OCI-LY7 (cell line): ENCODE measurements at regions of chr12 and their contacts with region 1.

Region 1: GRCh38 chr12:95336390-95337067 is 118.9 kb downstream of the VEZT start:
- DNase-seq: peak; percentile 89
- H3K4me3 ChIP-seq: peak overlapping the region; percentile 59
- H3K27ac ChIP-seq: peak overlapping the region; percentile 68
- H3K4me1 ChIP-seq: peaks cover 80% of the 10 kb centered on the region
- CTCF ChIP-seq: peak; percentile 98

Region 2: DNA sequence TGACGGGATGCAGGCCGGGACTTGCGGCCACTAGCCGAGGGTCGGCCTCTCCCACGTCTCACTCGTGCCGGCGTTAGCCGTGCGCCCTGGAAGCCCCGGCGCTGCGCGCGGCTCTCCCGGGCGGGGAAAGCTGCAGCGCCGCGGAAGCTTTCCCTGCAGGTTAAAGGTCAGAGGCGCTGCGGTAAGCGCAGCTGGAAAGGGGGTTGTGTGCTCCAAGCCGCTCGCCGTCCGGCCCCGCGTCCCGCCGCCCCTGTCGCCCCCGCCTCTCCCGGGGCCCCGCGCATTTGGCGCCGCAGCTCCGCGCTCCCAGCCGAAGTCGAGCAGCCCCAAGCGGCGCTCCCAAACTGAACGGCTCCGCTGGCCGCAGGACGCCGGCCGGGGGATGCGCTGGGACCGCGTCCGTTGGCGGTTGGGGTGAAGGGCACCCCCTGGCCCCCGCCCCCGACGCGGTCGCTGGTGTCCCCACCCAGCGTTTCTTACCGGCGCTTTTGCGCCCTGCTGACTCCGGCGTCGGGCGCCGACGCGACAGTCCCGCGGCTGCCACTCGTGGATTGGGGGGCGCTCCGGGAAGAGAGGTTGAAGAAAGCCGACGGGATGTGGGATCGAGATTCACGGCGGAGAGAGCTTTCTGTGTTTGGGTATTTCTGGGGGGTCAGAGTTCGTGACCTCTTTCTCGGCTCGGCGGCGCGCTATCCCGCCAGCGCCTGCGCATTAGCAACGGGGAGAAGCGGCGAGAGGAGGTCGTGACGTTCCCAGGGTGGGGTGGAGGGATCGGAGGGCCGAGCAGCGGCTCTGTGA is 263.4 kb before region 1 on chr12 and contains the start of gene NR2C1:
- CTCF ChIA-PET with region 1: no interaction called
- POLR2A ChIA-PET with region 1: no interaction called
- intact Hi-C with region 1: loop called (anchors 1 kb)
- DNase-seq: peak; percentile 97
- H3K4me3 ChIP-seq: peak within 1 kb of the TSS; percentile 93
- H3K27ac ChIP-seq: peak within 1 kb of the TSS; percentile 53
- H3K4me1 ChIP-seq: peaks cover 13% of the 10 kb centered on the region
- CTCF ChIP-seq: no peak
- total RNA-seq, gene NR2C1: 37.5 and 43.4 TPM in 2 replicates

Region 3: GRCh38 chr12:95117178-95117599 is 219.3 kb before region 1 on chr12:
- CTCF ChIA-PET with region 1: interaction called, 9 read pairs
- POLR2A ChIA-PET with region 1: interaction called, 3 read pairs
- intact Hi-C with region 1: loop called (anchors 1 kb)
- DNase-seq: peak; percentile 89
- H3K4me3 ChIP-seq: no peak overlapping the region
- H3K27ac ChIP-seq: no peak overlapping the region
- H3K4me1 ChIP-seq: peaks cover 8% of the 10 kb centered on the region
- CTCF ChIP-seq: peak; percentile 93